ENCODE measurements at regions of chr10 and their contacts with region 1.

Region 1: GRCh38 chr10:470338-470999 is 219.0 kb downstream of the DIP2C start:
- DNase-seq: peak in 7 of 9 donors; percentile 64 to 84 (median 78)
- ATAC-seq: peak; percentile 83
- H3K4me3 ChIP-seq: peak overlapping the region; percentile 30
- H3K4me3 Mint-ChIP-seq: peak overlapping the region; percentile 39 to 87 (median 72)
- H3K27ac ChIP-seq: peak overlapping the region; percentile 43
- H3K27ac Mint-ChIP-seq: peak overlapping the region; percentile 21 to 94 (median 93)
- H3K4me1 ChIP-seq: peaks cover 17 to 29% of the 10 kb centered on the region in 2 donors
- H3K4me1 Mint-ChIP-seq: peaks cover 13 to 39% (median 31%) of the 10 kb centered on the region in 7 donors
- H3K27me3 ChIP-seq: no peaks in the 10 kb centered on the region
- H3K27me3 Mint-ChIP-seq: no peaks in the 10 kb centered on the region

Region 2: GRCh38 chr10:178208-178607 is 292.3 kb before region 1 on chr10:
- CTCF ChIA-PET with region 1: no interaction called
- POLR2A ChIA-PET with region 1: no interaction called
- intact Hi-C with region 1: loop called in 1 of 2 experiments (anchors 1 kb)
- DNase-seq: peak in 4 of 9 donors; percentile 2 to 11 (median 8)
- ATAC-seq: peak; percentile 34
- H3K4me3 ChIP-seq: no peak overlapping the region
- H3K4me3 Mint-ChIP-seq: no peak overlapping the region
- H3K27ac ChIP-seq: no peak overlapping the region
- H3K27ac Mint-ChIP-seq: peak overlapping the region in 1 of 9 donors; percentile 56
- H3K4me1 ChIP-seq: no peaks in the 10 kb centered on the region
- H3K4me1 Mint-ChIP-seq: peaks cover 0 to 34% (median 15%) of the 10 kb centered on the region in 7 donors
- H3K27me3 ChIP-seq: no peaks in the 10 kb centered on the region
- H3K27me3 Mint-ChIP-seq: no peaks in the 10 kb centered on the region

Region 3: GRCh38 chr10:191711-192518 is 278.6 kb before region 1 on chr10:
- CTCF ChIA-PET with region 1: no interaction called
- POLR2A ChIA-PET with region 1: no interaction called
- intact Hi-C with region 1: no loop called
- DNase-seq: no peak
- ATAC-seq: no peak
- H3K4me3 ChIP-seq: no peak overlapping the region
- H3K4me3 Mint-ChIP-seq: no peak overlapping the region
- H3K27ac ChIP-seq: no peak overlapping the region
- H3K27ac Mint-ChIP-seq: no peak overlapping the region
- H3K4me1 ChIP-seq: no peaks in the 10 kb centered on the region
- H3K4me1 Mint-ChIP-seq: peaks cover 0 to 35% (median 14%) of the 10 kb centered on the region in 7 donors
- H3K27me3 ChIP-seq: no peaks in the 10 kb centered on the region
- H3K27me3 Mint-ChIP-seq: no peaks in the 10 kb centered on the region

Region 4: GRCh38 chr10:329361-330099 is 140.9 kb before region 1 on chr10:
- CTCF ChIA-PET with region 1: no interaction called
- POLR2A ChIA-PET with region 1: interaction called, 3 read pairs
- intact Hi-C with region 1: loop called in 1 of 2 experiments (anchors 1 kb)
- DNase-seq: peak in 3 of 9 donors; percentile 10 to 15 (median 13)
- ATAC-seq: peak; percentile 31
- H3K4me3 ChIP-seq: no peak overlapping the region
- H3K4me3 Mint-ChIP-seq: peak overlapping the region; percentile 54 to 85 (median 70)
- H3K27ac ChIP-seq: peak overlapping the region; percentile 16
- H3K27ac Mint-ChIP-seq: peak overlapping the region; percentile 8 to 95 (median 79)
- H3K4me1 ChIP-seq: peaks cover 20 to 25% of the 10 kb centered on the region in 2 donors
- H3K4me1 Mint-ChIP-seq: peaks cover 21 to 53% (median 31%) of the 10 kb centered on the region in 7 donors
- H3K27me3 ChIP-seq: no peaks in the 10 kb centered on the region
- H3K27me3 Mint-ChIP-seq: no peaks in the 10 kb centered on the region

Region 5: GRCh38 chr10:377228-377627 is 93.2 kb before region 1 on chr10:
- CTCF ChIA-PET with region 1: no interaction called
- POLR2A ChIA-PET with region 1: no interaction called
- intact Hi-C with region 1: loop called in 1 of 2 experiments (anchors 1 kb)
- DNase-seq: peak in 3 of 9 donors; percentile 5 to 12 (median 10)
- ATAC-seq: no peak
- H3K4me3 ChIP-seq: no peak overlapping the region
- H3K4me3 Mint-ChIP-seq: peak overlapping the region in 2 of 10 donors; percentile 18 to 20
- H3K27ac ChIP-seq: no peak overlapping the region
- H3K27ac Mint-ChIP-seq: no peak overlapping the region
- H3K4me1 ChIP-seq: peaks cover 0 to 11% of the 10 kb centered on the region in 2 donors
- H3K4me1 Mint-ChIP-seq: peaks cover 0 to 27% (median 14%) of the 10 kb centered on the region in 7 donors
- H3K27me3 ChIP-seq: no peaks in the 10 kb centered on the region
- H3K27me3 Mint-ChIP-seq: peaks cover 0 to 13% (median 0%) of the 10 kb centered on the region in 5 donors

Region 6: GRCh38 chr10:416091-416515 is 54.4 kb before region 1 on chr10:
- CTCF ChIA-PET with region 1: no interaction called
- POLR2A ChIA-PET with region 1: interaction called, 4 read pairs
- intact Hi-C with region 1: loop called in 1 of 2 experiments (anchors 5 kb)
- DNase-seq: no peak
- ATAC-seq: no peak
- H3K4me3 ChIP-seq: no peak overlapping the region
- H3K4me3 Mint-ChIP-seq: no peak overlapping the region
- H3K27ac ChIP-seq: no peak overlapping the region
- H3K27ac Mint-ChIP-seq: no peak overlapping the region
- H3K4me1 ChIP-seq: no peaks in the 10 kb centered on the region
- H3K4me1 Mint-ChIP-seq: peaks cover 0 to 2% (median 0%) of the 10 kb centered on the region in 7 donors
- H3K27me3 ChIP-seq: no peaks in the 10 kb centered on the region
- H3K27me3 Mint-ChIP-seq: peaks cover 0 to 7% (median 0%) of the 10 kb centered on the region in 5 donors

Region 7: GRCh38 chr10:427761-428519 is 42.5 kb before region 1 on chr10:
- CTCF ChIA-PET with region 1: no interaction called
- POLR2A ChIA-PET with region 1: no interaction called
- intact Hi-C with region 1: no loop called
- DNase-seq: no peak
- ATAC-seq: no peak
- H3K4me3 ChIP-seq: no peak overlapping the region
- H3K4me3 Mint-ChIP-seq: no peak overlapping the region
- H3K27ac ChIP-seq: no peak overlapping the region
- H3K27ac Mint-ChIP-seq: no peak overlapping the region
- H3K4me1 ChIP-seq: no peaks in the 10 kb centered on the region
- H3K4me1 Mint-ChIP-seq: peaks cover 0 to 31% (median 9%) of the 10 kb centered on the region in 7 donors
- H3K27me3 ChIP-seq: no peaks in the 10 kb centered on the region
- H3K27me3 Mint-ChIP-seq: peaks cover 0 to 13% (median 0%) of the 10 kb centered on the region in 5 donors

Region 8: DNA sequence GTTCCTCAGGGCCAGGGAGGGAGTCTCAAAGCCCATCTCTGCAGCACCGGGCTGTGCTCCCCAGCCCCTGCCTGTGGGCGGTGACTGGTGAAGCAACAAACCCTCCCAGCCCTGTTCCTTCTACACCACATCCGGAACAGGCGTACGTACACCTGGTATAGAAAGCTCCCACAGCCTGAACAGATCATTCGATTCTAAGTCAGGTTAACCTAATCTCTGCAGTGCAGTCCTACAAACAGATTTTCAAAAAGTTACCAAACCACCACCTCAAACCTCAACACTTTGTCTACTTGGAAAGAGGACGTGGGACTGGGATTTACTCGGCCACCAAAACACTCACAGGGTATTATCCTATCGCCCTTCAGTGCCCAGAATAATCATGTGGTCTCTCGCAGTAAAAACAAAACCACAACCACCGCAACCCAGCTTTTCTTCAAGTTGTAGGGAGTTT is 19.4 kb before region 1 on chr10:
- CTCF ChIA-PET with region 1: interaction called, 15 read pairs
- POLR2A ChIA-PET with region 1: interaction called, 58 read pairs
- intact Hi-C with region 1: loop called in 1 of 2 experiments (anchors 1 kb)
- DNase-seq: peak; percentile 17 to 87 (median 85)
- ATAC-seq: peak; percentile 97
- H3K4me3 ChIP-seq: peak overlapping the region; percentile 31
- H3K4me3 Mint-ChIP-seq: peak overlapping the region; percentile 65 to 85 (median 80)
- H3K27ac ChIP-seq: peak overlapping the region; percentile 52
- H3K27ac Mint-ChIP-seq: peak overlapping the region; percentile 72 to 95 (median 89)
- H3K4me1 ChIP-seq: peaks cover 25 to 54% of the 10 kb centered on the region in 2 donors
- H3K4me1 Mint-ChIP-seq: peaks cover 9 to 76% (median 64%) of the 10 kb centered on the region in 7 donors
- H3K27me3 ChIP-seq: no peaks in the 10 kb centered on the region
- H3K27me3 Mint-ChIP-seq: peaks cover 0 to 21% (median 0%) of the 10 kb centered on the region in 5 donors